Heart right ventricle (tissue), 16 donors: ENCODE measurements at regions of chrX and their contacts with region 1.

Region 1: DNA sequence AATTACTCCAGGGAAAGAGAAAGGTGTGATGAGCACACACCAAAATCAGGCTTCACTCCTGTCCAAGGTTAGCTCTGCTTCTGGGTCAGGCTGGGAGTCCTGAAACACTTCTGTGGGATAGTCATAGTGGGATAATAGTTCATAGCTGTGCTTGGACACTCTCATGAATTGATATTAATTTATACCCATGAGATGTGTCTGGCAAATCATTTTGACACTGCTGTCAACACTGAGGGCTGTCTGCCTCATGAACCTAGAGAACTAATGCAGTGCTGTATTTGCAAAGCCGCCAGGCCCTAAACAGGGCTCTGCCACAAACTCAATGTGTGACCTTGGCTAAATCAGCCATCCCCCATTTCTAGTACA is 24.5 kb upstream of the PGRMC1 start:
- DNase-seq: peak in 1 of 2 donors; percentile 7
- ATAC-seq: peak; percentile 75 to 96 (median 89)
- H3K4me3 ChIP-seq: no peak overlapping the region
- H3K27ac ChIP-seq: peak overlapping the region in 7 of 10 donors; percentile 22 to 71 (median 58)
- H3K4me1 ChIP-seq: no peaks in the 10 kb centered on the region
- H3K27me3 ChIP-seq: peaks cover 0 to 18% (median 0%) of the 10 kb centered on the region in 7 donors
- CTCF ChIP-seq: no peak

Region 2: GRCh38 chrX:119273420-119274192 is 62.0 kb after region 1 on chrX:
- intact Hi-C with region 1: loop called in 1 of 10 experiments (anchors 10 kb)
- DNase-seq: peak; percentile 22 to 56
- ATAC-seq: peak in 4 of 8 donors; percentile 52 to 88 (median 68)
- H3K4me3 ChIP-seq: peak overlapping the region in 6 of 10 donors; percentile 8 to 31 (median 29)
- H3K27ac ChIP-seq: no peak overlapping the region
- H3K4me1 ChIP-seq: peaks cover 0 to 9% (median 0%) of the 10 kb centered on the region in 9 donors
- H3K27me3 ChIP-seq: peaks cover 0 to 61% (median 4%) of the 10 kb centered on the region in 7 donors
- CTCF ChIP-seq: peak in 5 of 9 donors; percentile 7 to 36 (median 17)